Panc1 (cell line): ENCODE measurements at regions of chr6 and their contacts with region 1.

Region 1: DNA sequence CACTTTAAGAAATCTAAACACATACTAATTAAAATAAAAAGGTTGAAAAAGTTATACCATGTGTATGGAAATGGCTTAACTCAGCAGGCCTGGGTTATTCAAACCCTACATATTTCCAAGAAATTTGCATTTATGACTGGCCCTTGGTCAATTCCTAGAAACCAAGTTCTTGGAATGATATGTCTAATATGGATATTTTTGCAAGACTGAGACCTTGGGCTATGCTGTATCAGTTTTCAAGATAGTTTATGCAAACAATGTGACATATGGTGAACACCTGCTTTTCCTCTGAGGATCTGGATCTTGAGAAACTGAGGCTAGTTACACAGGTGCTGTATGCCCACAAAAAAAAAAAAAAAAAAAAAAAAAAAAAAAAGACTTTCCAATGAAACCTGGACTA is 536.9 kb upstream of the HS3ST5 start:
- DNase-seq: no peak
- ATAC-seq: no peak
- H3K4me3 ChIP-seq: no peak overlapping the region
- H3K27ac ChIP-seq: no peak overlapping the region
- H3K4me1 ChIP-seq: no peaks in the 10 kb centered on the region
- H3K27me3 ChIP-seq: no peaks in the 10 kb centered on the region
- CTCF ChIP-seq: no peak

Region 2: DNA sequence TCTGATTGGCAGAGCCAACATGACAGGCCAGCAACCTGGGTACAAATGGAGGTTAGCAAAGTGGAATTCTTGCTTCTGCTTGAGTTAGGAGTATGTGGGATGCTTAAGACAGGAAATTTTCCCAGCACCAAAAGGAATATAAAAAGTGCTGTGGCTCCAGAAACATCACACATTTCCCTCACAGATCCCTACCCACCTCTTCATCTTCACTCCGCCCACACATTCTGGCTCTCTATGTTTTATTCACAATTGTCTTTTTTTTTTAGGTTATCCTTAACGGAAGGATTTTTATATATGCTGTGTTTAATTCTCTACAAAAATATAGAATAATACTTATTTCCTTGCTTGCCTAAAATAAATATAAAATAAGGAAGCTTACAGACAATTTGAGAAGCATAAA is 26.4 kb after region 1 on chr6:
- CTCF ChIA-PET with region 1: no interaction called
- POLR2A ChIA-PET with region 1: interaction called, 15 read pairs
- in situ Hi-C with region 1: no loop called
- intact Hi-C with region 1: no loop called
- DNase-seq: no peak
- ATAC-seq: no peak
- H3K4me3 ChIP-seq: no peak overlapping the region
- H3K27ac ChIP-seq: no peak overlapping the region
- H3K4me1 ChIP-seq: no peaks in the 10 kb centered on the region
- H3K27me3 ChIP-seq: no peaks in the 10 kb centered on the region
- CTCF ChIP-seq: no peak